Activated CD4-positive, alpha-beta T cell treated with anti-CD3 and anti-CD28 coated beads, Interleukin-2, amount 10 ng/mL, durations not matched to agents 24 days and 14 days (primary cell): ENCODE measurements at regions of chr1 and their contacts with region 1.

Region 1: GRCh38 chr1:172180501-172181285 is 239.8 kb upstream of the C1orf105 start:
- DNase-seq: peak; percentile 84
- H3K4me3 Mint-ChIP-seq: peak overlapping the region; percentile 82
- H3K27ac Mint-ChIP-seq: peak overlapping the region; percentile 96
- H3K4me1 Mint-ChIP-seq: peaks cover 38% of the 10 kb centered on the region
- H3K27me3 Mint-ChIP-seq: no peaks in the 10 kb centered on the region

Region 2: DNA sequence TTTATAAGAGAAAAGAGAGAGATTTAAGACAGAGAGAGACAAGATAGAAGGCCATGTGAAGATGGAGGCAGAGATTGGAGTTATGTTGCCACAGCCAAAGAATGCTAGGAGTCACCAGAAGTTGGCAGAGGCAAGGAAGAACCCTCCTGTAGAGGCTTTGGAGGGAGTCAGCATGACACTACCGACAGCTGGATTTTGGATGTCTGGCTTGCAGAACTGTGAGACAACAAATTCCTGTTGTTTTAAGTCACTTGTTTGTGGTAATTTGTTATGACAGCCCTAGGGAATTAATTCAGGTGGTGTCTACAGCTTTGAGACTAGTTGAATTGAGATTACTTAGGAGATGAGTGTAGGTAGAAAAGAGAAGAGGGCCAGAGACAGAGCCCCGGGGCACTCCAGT is 180.9 kb before region 1 on chr1:
- intact Hi-C with region 1: no loop called
- DNase-seq: no peak
- H3K4me3 Mint-ChIP-seq: no peak overlapping the region
- H3K27ac Mint-ChIP-seq: no peak overlapping the region
- H3K4me1 Mint-ChIP-seq: peaks cover 3% of the 10 kb centered on the region
- H3K27me3 Mint-ChIP-seq: peaks cover 2% of the 10 kb centered on the region

Region 3: GRCh38 chr1:172069534-172069933 is 111.2 kb before region 1 on chr1:
- intact Hi-C with region 1: no loop called
- DNase-seq: no peak
- H3K4me3 Mint-ChIP-seq: no peak overlapping the region
- H3K27ac Mint-ChIP-seq: no peak overlapping the region
- H3K4me1 Mint-ChIP-seq: peaks cover 2% of the 10 kb centered on the region
- H3K27me3 Mint-ChIP-seq: no peaks in the 10 kb centered on the region

Region 4: GRCh38 chr1:172135076-172135672 is 45.5 kb before region 1 on chr1:
- intact Hi-C with region 1: loop called (anchors 1 kb)
- DNase-seq: peak; percentile 63
- H3K4me3 Mint-ChIP-seq: no peak overlapping the region
- H3K27ac Mint-ChIP-seq: no peak overlapping the region
- H3K4me1 Mint-ChIP-seq: peaks cover 16% of the 10 kb centered on the region
- H3K27me3 Mint-ChIP-seq: no peaks in the 10 kb centered on the region

Region 5: DNA sequence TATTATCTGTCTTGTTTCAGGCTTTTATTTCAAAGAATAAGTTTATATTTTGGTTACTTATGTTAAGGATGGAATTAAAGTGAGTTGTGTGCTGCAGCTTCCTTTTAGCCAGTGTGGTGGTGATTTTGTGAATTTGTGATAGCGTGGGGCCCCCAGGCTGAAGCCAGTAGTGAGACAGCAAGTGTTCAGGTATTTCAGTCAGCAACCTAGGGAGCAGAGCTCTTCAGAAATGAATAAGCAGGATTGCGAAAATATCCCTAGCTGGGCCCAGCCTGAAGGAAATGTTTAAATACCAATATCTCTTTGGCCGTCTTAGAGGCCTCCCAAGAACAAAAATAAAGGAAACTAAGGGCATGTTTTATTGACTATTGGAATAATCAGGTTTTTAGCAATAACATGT is 89.0 kb after region 1 on chr1:
- intact Hi-C with region 1: loop called (anchors 1 kb)
- DNase-seq: no peak
- H3K4me3 Mint-ChIP-seq: peak overlapping the region; percentile 29
- H3K27ac Mint-ChIP-seq: peak overlapping the region; percentile 88
- H3K4me1 Mint-ChIP-seq: peaks cover 44% of the 10 kb centered on the region
- H3K27me3 Mint-ChIP-seq: no peaks in the 10 kb centered on the region

Region 6: DNA sequence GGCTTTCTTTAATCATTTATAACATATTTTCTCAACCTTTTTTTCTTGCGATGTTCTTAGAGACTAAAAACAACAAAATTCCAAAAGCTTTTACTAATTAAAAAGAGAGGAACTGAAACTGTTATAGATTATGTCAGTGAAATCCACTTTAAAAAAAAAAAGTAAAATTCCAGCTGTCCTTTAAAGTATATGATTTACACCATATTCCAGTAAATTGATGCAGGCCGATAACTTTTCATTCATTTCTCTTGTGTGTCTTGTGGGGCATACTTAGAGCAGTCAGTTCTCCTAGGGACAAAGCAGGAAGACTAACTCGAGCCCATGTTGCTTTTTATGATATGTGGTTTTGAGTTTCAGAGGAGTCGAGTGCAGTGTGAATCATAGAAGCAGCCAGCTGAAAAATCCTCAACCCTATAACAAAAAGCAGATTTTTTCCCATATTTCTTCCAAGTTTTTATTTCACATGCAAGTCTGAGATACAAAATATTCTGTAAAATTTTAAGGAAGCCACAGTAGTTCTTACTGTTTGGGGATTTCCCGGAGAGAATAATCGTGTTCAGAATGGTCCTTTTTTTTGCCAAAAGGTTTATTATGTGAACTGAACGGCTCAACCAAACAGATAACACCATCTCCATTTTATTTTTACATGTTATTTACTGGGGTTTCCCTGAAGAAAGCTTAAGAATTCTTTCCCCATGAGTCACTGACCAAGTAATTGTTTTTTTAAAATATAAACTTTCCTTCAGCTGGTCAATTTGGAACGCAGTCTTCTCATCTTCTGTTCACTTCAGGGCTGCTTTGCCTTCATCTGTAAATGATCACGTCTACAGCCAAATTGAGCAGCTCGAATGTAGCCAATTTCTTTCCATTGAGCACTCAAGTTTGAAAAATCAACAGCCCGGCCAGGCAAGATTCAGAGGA is 162.8 kb after region 1 on chr1:
- intact Hi-C with region 1: loop called (anchors 1 kb)
- DNase-seq: no peak
- H3K4me3 Mint-ChIP-seq: peak overlapping the region; percentile 47
- H3K27ac Mint-ChIP-seq: peak overlapping the region; percentile 12
- H3K4me1 Mint-ChIP-seq: peaks cover 43% of the 10 kb centered on the region
- H3K27me3 Mint-ChIP-seq: no peaks in the 10 kb centered on the region